Dorsolateral prefrontal cortex (tissue), 120 donors: ENCODE measurements at regions of chr2 and their contacts with region 1.

Region 1: DNA sequence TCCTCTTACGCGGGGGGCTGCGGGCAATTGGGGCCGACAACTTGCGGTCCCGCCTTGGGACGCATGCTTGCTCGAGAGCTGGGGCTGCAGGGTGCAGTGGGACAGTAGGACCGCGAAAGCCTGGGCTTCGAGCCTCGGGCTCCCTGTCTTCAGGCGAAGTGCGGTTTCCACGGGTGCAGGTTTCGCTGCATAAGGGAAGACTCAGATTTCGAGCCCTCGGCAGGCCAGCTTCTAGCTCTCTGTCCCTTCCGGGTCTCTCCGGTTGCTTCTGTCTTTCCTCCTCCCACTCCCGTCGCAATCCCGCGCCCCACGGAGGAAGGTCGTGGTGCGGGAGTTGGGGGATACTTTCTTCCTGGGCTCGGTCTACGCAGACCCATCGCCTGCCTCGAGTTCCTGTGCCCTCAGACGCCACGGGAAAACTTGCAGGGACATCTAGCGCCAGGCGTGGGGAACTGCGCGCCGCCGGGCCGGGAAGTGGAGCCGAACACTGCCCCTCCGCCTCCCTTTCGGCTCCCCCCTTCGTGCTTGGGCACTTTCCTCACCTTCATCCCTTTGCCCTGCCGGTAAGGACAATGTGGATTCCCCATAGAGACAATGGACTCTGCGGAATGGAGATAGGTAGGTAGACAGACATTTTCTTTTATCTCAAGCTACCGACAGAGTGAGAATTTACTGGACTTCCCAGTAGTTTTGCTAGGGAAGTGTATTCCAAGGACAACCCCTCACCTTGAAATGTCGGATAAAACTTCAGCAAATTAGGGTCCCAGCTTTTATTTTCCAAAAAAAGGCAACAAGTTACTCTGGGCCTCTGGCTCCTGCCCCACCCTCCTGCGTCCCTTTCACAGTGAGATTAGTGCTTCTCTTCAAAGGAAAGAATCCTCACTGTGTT is 4.2 kb upstream of the HOXD13 start:
- DNase-seq: peak in 4 of 10 donors; percentile 11 to 63 (median 26)
- H3K4me3 ChIP-seq: peak overlapping the region in 20 of 59 donors; percentile 11 to 56 (median 30)
- H3K27ac ChIP-seq: no peak overlapping the region
- H3K27me3 ChIP-seq: peaks cover 51 to 100% (median 100%) of the 10 kb centered on the region in 45 donors
- CTCF ChIP-seq: peak; percentile 19 to 79 (median 66)

Region 2: DNA sequence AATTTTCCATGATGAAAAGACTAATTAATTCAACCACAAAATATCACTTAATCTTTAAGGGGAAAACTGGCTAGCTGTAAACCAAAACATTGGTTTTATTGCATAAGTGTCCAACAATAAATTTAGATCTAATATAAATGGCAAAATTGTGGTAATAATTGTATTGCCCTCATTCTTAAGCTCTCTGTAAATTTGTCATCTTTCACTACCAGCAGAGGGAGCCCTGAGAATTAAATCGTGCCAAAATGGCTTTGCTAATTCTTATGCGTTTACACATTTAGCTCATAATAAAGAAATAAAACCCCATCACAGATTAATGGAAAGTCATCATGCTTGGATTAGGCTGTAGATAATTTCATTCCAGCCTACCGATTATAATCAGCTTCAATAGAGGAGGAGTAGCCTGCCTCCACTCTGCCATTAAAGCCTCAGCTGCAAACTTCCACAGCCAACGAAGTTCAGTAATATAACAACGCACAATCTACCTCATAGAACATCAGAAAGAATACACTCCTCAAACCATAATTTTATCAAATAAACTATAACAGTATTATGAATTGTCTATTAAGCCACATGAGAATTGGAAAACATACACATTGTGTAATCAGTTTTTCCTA is 836.8 kb before region 1 on chr2:
- intact Hi-C with region 1: loop called in 1 of 2 experiments (anchors 10 kb)
- DNase-seq: no peak
- H3K4me3 ChIP-seq: no peak overlapping the region
- H3K27ac ChIP-seq: no peak overlapping the region
- H3K27me3 ChIP-seq: peaks cover 0 to 52% (median 5%) of the 10 kb centered on the region in 45 donors
- CTCF ChIP-seq: peak; percentile 46 to 78 (median 66)

Region 3: GRCh38 chr2:175366815-175367214 is 721.5 kb before region 1 on chr2:
- intact Hi-C with region 1: loop called (anchors 5 kb)
- DNase-seq: peak in 2 of 10 donors; percentile 15 to 35
- H3K4me3 ChIP-seq: no peak overlapping the region
- H3K27ac ChIP-seq: no peak overlapping the region
- H3K27me3 ChIP-seq: peaks cover 0 to 85% (median 45%) of the 10 kb centered on the region in 45 donors
- CTCF ChIP-seq: peak; percentile 31 to 82 (median 66)

Region 4: GRCh38 chr2:175690113-175690837 is 398.0 kb before region 1 on chr2:
- intact Hi-C with region 1: loop called (anchors 1 to 5 kb)
- DNase-seq: peak in 2 of 10 donors; percentile 15 to 21
- H3K4me3 ChIP-seq: no peak overlapping the region
- H3K27ac ChIP-seq: no peak overlapping the region
- H3K27me3 ChIP-seq: peaks cover 0 to 66% (median 24%) of the 10 kb centered on the region in 45 donors
- CTCF ChIP-seq: peak in 55 of 56 donors; percentile 51 to 97 (median 81)

Region 5: GRCh38 chr2:175698061-175698460 is 390.2 kb before region 1 on chr2:
- intact Hi-C with region 1: loop called in 1 of 2 experiments (anchors 5 kb)
- DNase-seq: no peak
- H3K4me3 ChIP-seq: no peak overlapping the region
- H3K27ac ChIP-seq: no peak overlapping the region
- H3K27me3 ChIP-seq: peaks cover 0 to 33% (median 5%) of the 10 kb centered on the region in 45 donors
- CTCF ChIP-seq: no peak

Region 6: GRCh38 chr2:176056406-176056805 is 31.9 kb before region 1 on chr2:
- intact Hi-C with region 1: no loop called
- DNase-seq: no peak
- H3K4me3 ChIP-seq: no peak overlapping the region
- H3K27ac ChIP-seq: no peak overlapping the region
- H3K27me3 ChIP-seq: peaks cover 0 to 63% (median 14%) of the 10 kb centered on the region in 45 donors
- CTCF ChIP-seq: no peak

Region 7: DNA sequence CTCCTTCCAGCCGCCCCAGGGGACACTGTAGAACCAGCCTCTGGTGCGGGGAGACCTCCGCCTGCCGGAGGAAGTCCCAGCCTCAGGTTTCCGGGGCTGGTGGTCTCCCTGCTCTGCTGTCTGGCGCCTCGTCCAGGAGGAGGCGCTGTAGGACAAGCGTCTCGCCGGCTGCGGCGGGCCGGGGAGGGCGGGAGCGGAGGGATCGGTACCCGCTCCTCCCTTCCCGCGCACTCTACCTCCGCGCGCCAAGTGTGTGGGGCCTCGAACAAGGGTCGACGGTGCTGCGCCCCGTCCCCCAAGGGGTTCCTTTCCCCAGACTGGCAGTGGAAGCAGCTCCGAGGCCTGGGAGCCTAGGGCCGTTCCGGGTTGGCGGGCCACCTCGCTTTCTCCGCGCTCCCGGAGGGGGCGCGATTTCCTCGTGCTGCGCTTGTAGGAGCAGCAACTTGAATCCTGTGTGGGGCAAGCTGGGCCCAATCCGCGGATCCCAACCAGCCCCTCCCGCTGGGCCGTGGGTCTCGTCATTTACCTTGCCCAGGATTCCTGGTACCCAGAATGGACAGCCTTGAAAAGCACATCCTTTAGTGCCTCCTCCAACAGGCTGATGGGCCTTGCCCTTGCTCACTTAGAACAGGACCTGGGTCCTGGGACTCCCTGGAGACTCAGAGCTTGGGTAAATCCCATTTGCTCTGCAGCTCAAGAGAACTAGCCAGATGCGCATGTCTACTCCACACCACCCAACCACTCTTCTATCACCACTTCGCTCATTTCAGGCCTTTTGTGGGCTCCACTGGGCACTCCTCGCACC is 52.4 kb after region 1 on chr2:
- intact Hi-C with region 1: no loop called
- DNase-seq: peak in 9 of 10 donors; percentile 16 to 84 (median 55)
- H3K4me3 ChIP-seq: peak overlapping the region; percentile 20 to 77 (median 60)
- H3K27ac ChIP-seq: peak overlapping the region in 6 of 59 donors; percentile 32 to 74 (median 52)
- H3K27me3 ChIP-seq: peaks cover 4 to 99% (median 85%) of the 10 kb centered on the region in 45 donors
- CTCF ChIP-seq: peak; percentile 55 to 99 (median 92)